Activated CD4-positive, alpha-beta T cell treated with anti-CD3 and anti-CD28 coated beads for 36 hours (primary cell): ENCODE measurements at regions of chr1 and their contacts with region 1.

Region 1: DNA sequence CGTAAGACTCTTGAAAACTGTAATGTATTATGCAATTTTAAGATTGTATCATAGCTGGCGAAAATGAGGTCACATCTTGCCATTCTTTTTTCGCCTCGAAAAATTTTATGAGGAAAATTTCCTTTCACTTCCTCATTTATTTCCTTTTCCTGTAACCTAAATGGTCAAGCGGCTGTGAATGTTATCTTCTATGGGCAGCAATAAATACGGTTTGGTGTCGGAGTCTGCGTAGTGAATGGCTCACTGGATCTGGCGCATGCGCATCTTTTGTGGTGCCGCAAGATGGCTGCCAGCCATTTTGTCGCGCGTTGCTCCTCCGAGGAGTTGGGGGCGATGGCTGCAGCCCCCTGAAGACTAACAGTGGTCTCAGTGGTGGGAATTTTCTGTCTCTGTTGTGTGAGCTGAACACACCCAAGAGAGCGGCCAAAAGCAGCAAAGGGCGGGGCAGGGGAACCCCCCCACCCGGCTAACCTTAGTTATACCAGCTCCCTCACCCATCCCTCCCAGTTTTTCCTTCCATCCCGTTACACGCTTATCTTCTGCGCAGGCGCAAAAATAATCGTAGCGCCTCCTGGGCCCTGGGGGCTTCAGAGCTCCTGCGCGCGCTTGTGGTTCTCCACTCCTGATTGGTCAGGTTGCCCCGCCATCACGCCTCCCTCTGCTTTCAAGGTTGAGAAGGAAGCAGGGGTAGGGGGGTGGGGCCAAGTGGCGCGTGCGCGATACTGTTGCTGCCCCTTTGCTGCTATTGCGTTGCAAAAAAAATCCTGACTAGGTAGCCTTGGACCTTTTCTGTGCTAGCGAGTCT is at the start of gene RPRD2:
- DNase-seq: peak; percentile 99
- ATAC-seq: peak; percentile 95
- H3K4me3 Mint-ChIP-seq: peak within 1 kb of the TSS; percentile 91
- H3K27ac Mint-ChIP-seq: peak within 1 kb of the TSS; percentile 99
- H3K4me1 Mint-ChIP-seq: peaks cover 13% of the 10 kb centered on the region
- H3K27me3 Mint-ChIP-seq: no peaks in the 10 kb centered on the region
- total RNA-seq, gene RPRD2: 24.4 to 32.2 TPM

Region 2: GRCh38 chr1:150293433-150294168 is 70.0 kb before region 1 on chr1 and contains the start of gene MRPS21:
- CTCF ChIA-PET with region 1: no interaction called
- POLR2A ChIA-PET with region 1: interaction called, 3 read pairs
- intact Hi-C with region 1: loop called in 1 of 2 experiments (anchors 1 kb)
- DNase-seq: peak; percentile 93
- ATAC-seq: peak; percentile 99
- H3K4me3 Mint-ChIP-seq: peak within 1 kb of the TSS; percentile 95
- H3K27ac Mint-ChIP-seq: peak within 1 kb of the TSS; percentile 92
- H3K4me1 Mint-ChIP-seq: peaks cover 34% of the 10 kb centered on the region
- H3K27me3 Mint-ChIP-seq: no peaks in the 10 kb centered on the region
- total RNA-seq, gene MRPS21: 86.4 to 111 TPM

Region 3: GRCh38 chr1:150429805-150430204 is 66.2 kb after region 1 on chr1:
- CTCF ChIA-PET with region 1: no interaction called
- POLR2A ChIA-PET with region 1: no interaction called
- intact Hi-C with region 1: loop called in 1 of 2 experiments (anchors 5 kb)
- DNase-seq: no peak
- ATAC-seq: peak; percentile 60
- H3K4me3 Mint-ChIP-seq: no peak overlapping the region
- H3K27ac Mint-ChIP-seq: peak overlapping the region; percentile 16
- H3K4me1 Mint-ChIP-seq: peaks cover 7% of the 10 kb centered on the region
- H3K27me3 Mint-ChIP-seq: no peaks in the 10 kb centered on the region

Region 4: DNA sequence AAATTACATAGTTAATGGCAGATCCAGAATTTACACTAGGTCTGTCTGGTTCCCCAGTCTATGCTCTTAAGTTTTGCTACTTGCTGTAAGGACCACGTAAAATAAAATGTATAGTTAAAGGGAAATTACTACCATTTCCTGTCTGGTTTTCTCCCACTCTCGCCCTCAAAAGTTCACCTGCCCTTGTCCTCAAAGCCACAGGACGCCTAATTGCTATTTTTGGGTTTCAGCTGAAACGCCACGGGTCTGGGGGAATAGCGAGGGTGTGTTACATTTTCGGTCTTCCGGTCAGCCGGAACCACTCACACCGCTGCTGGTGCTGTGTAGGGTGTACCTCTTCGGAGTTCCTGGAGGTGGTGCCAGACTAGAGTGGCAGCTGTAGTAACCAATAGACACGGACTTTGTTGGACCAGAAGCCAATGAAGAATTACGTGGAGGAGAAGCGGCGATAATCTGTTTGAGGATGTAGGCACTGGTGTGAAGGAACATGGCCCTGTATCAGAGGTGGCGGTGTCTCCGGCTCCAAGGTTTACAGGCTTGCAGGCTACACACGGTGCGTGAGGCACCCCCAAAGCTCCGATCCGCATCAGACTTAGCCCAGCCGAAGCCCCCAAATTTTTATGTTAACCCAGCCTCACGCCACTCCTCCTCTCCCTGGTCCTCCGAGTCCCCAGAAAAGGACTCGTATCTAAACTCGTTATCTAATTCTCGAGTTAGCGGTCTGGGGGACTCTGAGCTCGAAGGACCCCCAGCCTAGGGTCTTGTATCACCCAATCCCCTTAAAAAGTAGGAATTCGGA is 123.5 kb after region 1 on chr1 and contains the start of gene TARS2:
- CTCF ChIA-PET with region 1: no interaction called
- POLR2A ChIA-PET with region 1: no interaction called
- intact Hi-C with region 1: loop called in 1 of 2 experiments (anchors 1 kb)
- DNase-seq: peak; percentile 96
- ATAC-seq: peak; percentile 100
- H3K4me3 Mint-ChIP-seq: peak within 1 kb of the TSS; percentile 96
- H3K27ac Mint-ChIP-seq: peak within 1 kb of the TSS; percentile 99
- H3K4me1 Mint-ChIP-seq: peaks cover 13% of the 10 kb centered on the region
- H3K27me3 Mint-ChIP-seq: no peaks in the 10 kb centered on the region
- total RNA-seq, gene TARS2: 43.8 to 58.6 TPM

Region 5: DNA sequence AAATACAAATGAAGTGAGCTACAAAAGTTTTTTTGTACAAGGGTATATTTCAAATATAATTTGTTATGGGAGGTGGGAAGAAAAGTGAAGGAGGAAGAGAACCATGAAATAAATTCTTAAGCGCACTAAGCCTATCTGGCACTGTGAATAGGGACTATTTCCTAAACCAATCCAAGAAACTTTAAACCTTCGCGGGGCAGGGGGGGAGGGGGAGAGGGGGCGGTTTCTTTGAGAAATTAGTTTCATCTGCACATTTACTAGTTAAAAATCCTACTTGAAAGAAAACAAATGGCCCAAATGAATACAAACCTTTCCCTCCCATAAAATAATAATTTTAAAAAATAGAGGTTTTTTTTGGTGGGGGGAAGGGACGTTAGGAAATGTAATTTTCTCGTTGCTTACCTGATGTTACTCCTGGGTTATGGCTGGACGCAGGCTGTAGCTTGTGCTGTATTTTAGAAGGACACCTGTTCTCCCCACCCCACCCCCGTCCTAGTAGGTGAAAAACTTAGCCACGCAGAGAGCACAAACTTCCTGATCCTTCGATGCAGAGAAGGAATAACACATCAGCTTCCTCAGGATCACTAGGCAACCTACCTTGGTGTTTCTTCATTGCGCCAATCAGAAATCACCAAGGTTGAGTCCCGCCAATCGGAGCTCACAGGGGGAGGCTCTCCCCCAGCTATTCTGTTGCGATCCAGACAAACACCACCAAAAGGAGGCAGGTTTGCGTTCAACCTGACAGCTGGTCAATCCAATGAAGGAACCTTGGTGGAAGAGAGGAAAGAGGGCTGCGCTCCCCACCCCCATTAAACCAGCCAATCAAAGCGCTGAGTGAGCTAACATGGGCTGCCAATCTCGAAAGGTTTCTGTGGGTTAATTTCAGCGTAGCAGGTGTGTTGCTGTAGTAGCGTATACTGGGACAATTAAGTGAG is 333.2 kb after region 1 on chr1 and contains the start of gene GOLPH3L:
- CTCF ChIA-PET with region 1: no interaction called
- POLR2A ChIA-PET with region 1: no interaction called
- intact Hi-C with region 1: loop called in 1 of 2 experiments (anchors 1 kb)
- DNase-seq: peak; percentile 93
- ATAC-seq: peak; percentile 100
- H3K4me3 Mint-ChIP-seq: peak within 1 kb of the TSS; percentile 98
- H3K27ac Mint-ChIP-seq: peak within 1 kb of the TSS; percentile 92
- H3K4me1 Mint-ChIP-seq: peaks cover 21% of the 10 kb centered on the region
- H3K27me3 Mint-ChIP-seq: peaks cover 3% of the 10 kb centered on the region
- total RNA-seq, gene GOLPH3L: 24.2 to 29.1 TPM

Region 6: GRCh38 chr1:151346769-151347522 is 983.3 kb after region 1 on chr1 and contains the start of gene RFX5:
- CTCF ChIA-PET with region 1: no interaction called
- POLR2A ChIA-PET with region 1: no interaction called
- intact Hi-C with region 1: loop called in 1 of 2 experiments (anchors 5 kb)
- DNase-seq: peak; percentile 96
- ATAC-seq: peak; percentile 98
- H3K4me3 Mint-ChIP-seq: peak within 1 kb of the TSS; percentile 96
- H3K27ac Mint-ChIP-seq: peak within 1 kb of the TSS; percentile 94
- H3K4me1 Mint-ChIP-seq: peaks cover 31% of the 10 kb centered on the region
- H3K27me3 Mint-ChIP-seq: no peaks in the 10 kb centered on the region
- total RNA-seq, gene RFX5: 47.6 to 50.4 TPM